ENCODE measurements at regions of chr10 and their contacts with region 1.

Region 1: GRCh38 chr10:124388823-124389612 is 29.7 kb downstream of the OAT start:
- DNase-seq: peak; percentile 88
- H3K4me3 Mint-ChIP-seq: peak overlapping the region; percentile 57
- H3K27ac Mint-ChIP-seq: no peak overlapping the region
- H3K4me1 Mint-ChIP-seq: no peaks in the 10 kb centered on the region
- H3K27me3 Mint-ChIP-seq: peaks cover 8% of the 10 kb centered on the region

Region 2: GRCh38 chr10:123994417-123995081 is 394.5 kb before region 1 on chr10:
- intact Hi-C with region 1: loop called (anchors 1 kb)
- DNase-seq: peak; percentile 72
- H3K4me3 Mint-ChIP-seq: peak overlapping the region; percentile 53
- H3K27ac Mint-ChIP-seq: no peak overlapping the region
- H3K4me1 Mint-ChIP-seq: peaks cover 12% of the 10 kb centered on the region
- H3K27me3 Mint-ChIP-seq: peaks cover 51% of the 10 kb centered on the region

Region 3: GRCh38 chr10:124221356-124222317 is 167.4 kb before region 1 on chr10:
- intact Hi-C with region 1: loop called (anchors 1 kb)
- DNase-seq: no peak
- H3K4me3 Mint-ChIP-seq: no peak overlapping the region
- H3K27ac Mint-ChIP-seq: peak overlapping the region; percentile 58
- H3K4me1 Mint-ChIP-seq: peaks cover 25% of the 10 kb centered on the region
- H3K27me3 Mint-ChIP-seq: peaks cover 13% of the 10 kb centered on the region

Region 4: GRCh38 chr10:124403548-124403947 is 14.5 kb after region 1 on chr10:
- intact Hi-C with region 1: loop called (anchors 1 kb)
- DNase-seq: peak; percentile 25
- H3K4me3 Mint-ChIP-seq: no peak overlapping the region
- H3K27ac Mint-ChIP-seq: no peak overlapping the region
- H3K4me1 Mint-ChIP-seq: peaks cover 11% of the 10 kb centered on the region
- H3K27me3 Mint-ChIP-seq: no peaks in the 10 kb centered on the region

Region 5: DNA sequence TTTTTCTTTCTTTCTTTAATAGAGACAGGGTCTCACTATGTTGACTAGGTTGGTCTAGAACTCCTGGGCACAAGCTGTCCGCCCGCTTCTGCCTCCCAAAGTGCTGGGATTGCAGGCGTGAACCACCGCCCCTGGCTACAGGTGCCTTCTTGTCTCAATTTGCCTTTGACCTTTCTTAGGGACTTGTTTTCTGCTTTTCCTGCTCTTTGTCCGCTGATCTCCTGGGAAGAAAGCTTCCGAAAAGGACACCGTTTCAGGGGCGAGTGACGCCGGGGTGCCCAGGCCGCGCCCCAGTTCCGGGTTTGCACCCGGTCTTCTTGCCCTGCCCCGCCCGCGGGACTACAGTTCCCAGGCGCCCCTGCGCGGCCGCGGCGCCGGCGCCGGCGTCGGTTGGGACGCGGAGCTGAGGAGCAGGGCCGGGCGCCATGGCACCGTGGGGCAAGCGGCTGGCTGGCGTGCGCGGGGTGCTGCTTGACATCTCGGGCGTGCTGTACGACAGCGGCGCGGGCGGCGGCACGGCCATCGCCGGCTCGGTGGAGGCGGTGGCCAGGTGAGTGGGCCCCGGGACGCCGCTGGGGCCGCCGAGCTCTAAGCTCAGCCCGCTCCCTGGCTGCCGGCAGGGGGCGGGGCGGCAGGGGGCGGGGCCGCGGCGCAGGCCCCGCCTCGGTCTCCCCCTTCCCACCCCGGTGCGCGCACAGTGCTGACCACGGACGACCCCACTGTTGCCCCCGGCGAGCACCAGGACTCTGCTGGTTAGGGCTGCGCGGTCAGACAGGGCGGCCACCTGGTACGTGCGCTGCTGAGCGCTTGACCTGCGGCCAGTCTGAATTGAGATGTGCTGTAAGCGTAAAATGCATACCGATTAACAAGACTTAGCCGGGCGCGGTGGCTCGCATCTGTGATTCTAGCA is 72.7 kb after region 1 on chr10 and contains the start of gene LHPP:
- intact Hi-C with region 1: loop called (anchors 2 kb)
- DNase-seq: peak; percentile 86
- H3K4me3 Mint-ChIP-seq: peak within 1 kb of the TSS; percentile 87
- H3K27ac Mint-ChIP-seq: peak within 1 kb of the TSS; percentile 98
- H3K4me1 Mint-ChIP-seq: peaks cover 26% of the 10 kb centered on the region
- H3K27me3 Mint-ChIP-seq: peaks cover 14% of the 10 kb centered on the region
- total RNA-seq, gene LHPP: 4.6 and 5.0 TPM in 2 replicates